Naive thymus-derived CD8-positive, alpha-beta T cell (primary cell): ENCODE measurements at regions of chr7 and their contacts with region 1.

Region 1: DNA sequence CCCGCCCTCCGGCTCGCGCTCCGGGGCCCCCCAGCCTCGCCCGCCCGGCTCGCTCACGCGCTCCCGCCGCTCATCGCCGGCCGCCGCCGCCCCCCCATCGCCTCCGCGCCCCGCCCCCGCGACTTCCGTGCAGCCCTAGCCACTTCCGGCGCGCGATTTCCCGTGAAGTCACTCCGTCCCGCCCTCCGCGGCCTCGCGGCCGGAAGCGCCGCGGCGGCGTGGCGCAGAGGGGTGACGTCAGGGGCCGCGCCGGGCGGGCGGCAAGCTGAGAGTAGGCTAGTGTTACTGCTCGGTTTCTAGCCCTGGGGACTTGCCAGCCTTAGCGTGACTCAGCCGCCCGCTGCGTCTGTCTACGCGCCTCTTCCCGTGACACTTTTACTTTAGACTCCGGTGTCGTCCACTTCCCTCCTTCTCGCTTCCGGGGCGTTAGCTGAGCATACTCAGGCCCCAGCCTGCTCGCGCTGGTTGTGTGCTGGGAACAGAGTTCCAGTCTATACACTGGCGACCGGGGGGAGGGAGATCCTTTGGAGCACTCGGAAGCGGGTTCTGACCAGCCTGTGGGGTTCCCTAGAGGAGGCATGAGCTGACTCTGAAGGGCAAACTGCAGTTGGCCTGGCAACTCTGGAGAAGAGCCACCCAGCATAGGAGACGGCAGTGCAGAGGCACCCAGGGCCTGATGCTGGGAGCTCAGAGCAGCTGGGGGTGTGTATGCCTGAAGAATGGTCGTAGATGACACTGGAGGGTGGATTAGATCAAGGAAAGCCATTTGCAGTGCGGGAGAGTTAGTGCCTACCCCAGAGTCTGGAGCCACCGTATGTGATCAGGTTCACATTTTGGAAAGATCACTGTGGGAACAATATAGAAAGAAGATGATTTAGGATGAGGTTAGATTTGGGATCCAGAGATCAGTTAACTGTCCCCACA is at the start of gene PURB:
- DNase-seq: peak; percentile 93 to 98 (median 96)
- ATAC-seq: peak; percentile 88 to 89
- H3K4me3 Mint-ChIP-seq: peak within 1 kb of the TSS; percentile 89 to 98 (median 96)
- H3K27ac Mint-ChIP-seq: peak within 1 kb of the TSS; percentile 98 to 100 (median 100)
- H3K4me1 Mint-ChIP-seq: peaks cover 5 to 61% (median 30%) of the 10 kb centered on the region in 4 donors
- H3K27me3 Mint-ChIP-seq: no peaks in the 10 kb centered on the region
- polyA plus RNA-seq, gene PURB: 2.0 to 3.2 (median 2.6) TPM

Region 2: GRCh38 chr7:44606450-44607254 is 279.0 kb before region 1 on chr7 and contains the start of gene OGDH:
- POLR2A ChIA-PET with region 1: interaction called, 20 read pairs
- DNase-seq: peak; percentile 97 to 100 (median 99)
- ATAC-seq: peak; percentile 94 to 95
- H3K4me3 Mint-ChIP-seq: peak within 1 kb of the TSS; percentile 92 to 100 (median 98)
- H3K27ac Mint-ChIP-seq: peak within 1 kb of the TSS; percentile 96 to 100 (median 99)
- H3K4me1 Mint-ChIP-seq: peaks cover 11 to 52% (median 41%) of the 10 kb centered on the region in 4 donors
- H3K27me3 Mint-ChIP-seq: peaks cover 0 to 5% (median 0%) of the 10 kb centered on the region in 5 donors
- polyA plus RNA-seq, gene OGDH: 23.9 to 30.6 (median 25.6) TPM

Region 3: DNA sequence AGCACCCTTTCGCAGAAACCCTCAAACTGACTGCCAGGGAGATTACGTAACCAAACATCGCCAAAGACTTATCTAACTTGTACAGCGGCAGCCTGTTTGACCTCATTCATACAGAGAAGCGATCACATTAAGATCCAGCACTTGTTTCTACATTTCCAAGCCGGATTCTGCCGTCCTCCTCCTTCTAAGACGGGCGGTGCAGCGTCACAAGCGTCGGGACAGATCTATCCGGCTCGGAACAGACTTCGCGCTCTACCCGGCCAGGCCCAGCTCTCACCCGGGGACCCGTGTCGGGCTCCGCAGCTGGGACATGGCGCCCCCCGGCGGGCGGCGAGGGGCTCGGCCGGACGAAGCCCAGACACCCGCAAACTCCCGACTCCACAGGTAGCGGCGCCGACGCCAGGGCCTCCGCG is 38.1 kb before region 1 on chr7:
- POLR2A ChIA-PET with region 1: interaction called, 37 read pairs
- DNase-seq: peak; percentile 78 to 94 (median 88)
- ATAC-seq: peak; percentile 63 to 65
- H3K4me3 Mint-ChIP-seq: peak overlapping the region; percentile 87 to 98 (median 94)
- H3K27ac Mint-ChIP-seq: peak overlapping the region; percentile 94 to 99 (median 98)
- H3K4me1 Mint-ChIP-seq: peaks cover 16 to 48% (median 37%) of the 10 kb centered on the region in 4 donors
- H3K27me3 Mint-ChIP-seq: peaks cover 0 to 3% (median 0%) of the 10 kb centered on the region in 5 donors

Region 4: GRCh38 chr7:44914992-44915607 is 29.4 kb after region 1 on chr7:
- POLR2A ChIA-PET with region 1: interaction called, 14 read pairs
- DNase-seq: peak; percentile 6 to 93 (median 72)
- ATAC-seq: peak; percentile 94 to 95
- H3K4me3 Mint-ChIP-seq: peak overlapping the region in 8 of 10 donors; percentile 12 to 71 (median 65)
- H3K27ac Mint-ChIP-seq: peak overlapping the region in 9 of 10 donors; percentile 79 to 94 (median 92)
- H3K4me1 Mint-ChIP-seq: peaks cover 0 to 6% (median 3%) of the 10 kb centered on the region in 4 donors
- H3K27me3 Mint-ChIP-seq: no peaks in the 10 kb centered on the region

Region 5: DNA sequence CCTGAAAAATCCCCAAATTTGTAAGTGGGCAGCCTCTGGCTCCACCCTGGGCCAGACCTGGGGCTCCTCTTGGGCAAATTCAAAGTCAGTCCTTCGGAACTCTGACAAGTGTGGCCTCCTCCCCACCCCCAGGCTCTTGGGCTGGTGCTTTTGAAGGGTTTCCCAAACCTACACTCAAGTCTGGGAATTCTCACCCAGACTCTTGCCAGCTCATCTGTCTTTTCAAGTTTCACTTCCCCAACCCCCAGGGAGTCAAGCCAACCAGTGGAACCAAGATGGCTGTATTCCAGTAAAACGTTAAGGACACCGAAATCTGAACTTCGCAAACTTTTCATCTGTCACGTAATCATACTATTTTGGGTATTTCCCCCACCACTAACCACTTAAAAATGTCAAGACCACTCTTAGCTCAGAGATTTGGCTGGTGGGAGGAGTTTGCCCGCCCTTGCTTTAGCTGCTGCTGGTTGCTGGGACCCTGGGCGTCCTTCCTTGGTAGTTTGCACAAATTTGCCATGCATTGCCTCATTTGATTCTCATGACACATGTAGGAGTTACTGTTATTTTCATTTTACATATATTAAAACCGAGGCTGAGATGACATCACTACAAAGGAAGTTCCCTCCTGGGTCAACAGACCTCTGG is 94.9 kb after region 1 on chr7:
- POLR2A ChIA-PET with region 1: interaction called, 15 read pairs
- DNase-seq: peak in 9 of 10 donors; percentile 21 to 71 (median 53)
- ATAC-seq: peak; percentile 29 to 39
- H3K4me3 Mint-ChIP-seq: peak overlapping the region; percentile 32 to 99 (median 94)
- H3K27ac Mint-ChIP-seq: peak overlapping the region; percentile 78 to 98 (median 94)
- H3K4me1 Mint-ChIP-seq: peaks cover 35 to 88% (median 82%) of the 10 kb centered on the region in 4 donors
- H3K27me3 Mint-ChIP-seq: no peaks in the 10 kb centered on the region

Region 6: DNA sequence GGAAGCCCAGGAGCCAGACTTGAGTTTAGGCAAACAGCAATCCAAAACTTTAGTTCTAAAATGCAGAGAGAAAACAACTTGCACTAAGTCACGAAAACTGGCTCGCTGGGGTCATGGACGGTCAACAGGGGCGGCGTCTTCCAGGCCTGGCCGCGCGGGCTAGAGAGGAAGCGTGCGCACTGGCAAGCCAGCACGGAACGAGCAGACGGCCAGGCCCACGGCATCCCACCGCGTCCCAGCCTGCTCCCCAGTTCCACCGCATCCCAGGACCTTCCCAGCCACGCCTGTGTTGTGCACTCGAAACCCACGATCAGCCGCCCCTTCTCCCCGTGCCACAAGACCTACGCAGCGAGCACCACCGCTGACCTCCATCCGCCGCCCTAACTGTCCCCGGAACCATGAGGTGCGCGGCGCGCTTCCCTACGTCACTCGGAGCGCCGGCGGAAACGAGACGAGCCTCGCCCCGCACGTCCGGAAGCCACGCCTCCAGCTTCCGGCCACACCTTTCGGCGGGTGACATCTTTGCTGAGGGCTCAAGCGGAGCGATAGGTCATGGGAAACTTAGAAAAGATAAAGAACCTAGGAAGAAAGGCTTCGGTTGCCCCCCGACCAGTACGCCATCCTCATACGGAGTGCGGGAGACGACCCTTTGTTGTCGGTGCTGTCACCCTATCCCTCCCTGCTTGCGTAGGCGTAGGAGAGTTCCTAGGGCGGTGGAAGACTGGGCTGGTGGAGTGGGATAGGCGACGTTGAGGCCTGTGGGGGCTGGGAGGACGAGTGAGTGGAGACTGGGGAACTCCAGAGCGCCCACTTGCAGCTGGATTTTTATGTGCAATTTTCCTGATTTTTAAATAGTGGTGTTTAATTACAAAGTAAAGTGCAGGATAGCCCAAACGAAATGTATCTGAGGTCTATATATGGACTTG is 225.9 kb after region 1 on chr7 and contains the start of gene TBRG4:
- POLR2A ChIA-PET with region 1: interaction called, 24 read pairs
- DNase-seq: peak; percentile 90 to 96 (median 94)
- ATAC-seq: peak; percentile 80
- H3K4me3 Mint-ChIP-seq: peak within 1 kb of the TSS; percentile 93 to 100 (median 96)
- H3K27ac Mint-ChIP-seq: peak within 1 kb of the TSS; percentile 97 to 100 (median 99)
- H3K4me1 Mint-ChIP-seq: peaks cover 19 to 56% (median 49%) of the 10 kb centered on the region in 4 donors
- H3K27me3 Mint-ChIP-seq: no peaks in the 10 kb centered on the region
- polyA plus RNA-seq, gene TBRG4: 51.3 to 95.7 (median 69.0) TPM